ENCODE measurements at regions of chr21 and their contacts with region 1.

Region 1: DNA sequence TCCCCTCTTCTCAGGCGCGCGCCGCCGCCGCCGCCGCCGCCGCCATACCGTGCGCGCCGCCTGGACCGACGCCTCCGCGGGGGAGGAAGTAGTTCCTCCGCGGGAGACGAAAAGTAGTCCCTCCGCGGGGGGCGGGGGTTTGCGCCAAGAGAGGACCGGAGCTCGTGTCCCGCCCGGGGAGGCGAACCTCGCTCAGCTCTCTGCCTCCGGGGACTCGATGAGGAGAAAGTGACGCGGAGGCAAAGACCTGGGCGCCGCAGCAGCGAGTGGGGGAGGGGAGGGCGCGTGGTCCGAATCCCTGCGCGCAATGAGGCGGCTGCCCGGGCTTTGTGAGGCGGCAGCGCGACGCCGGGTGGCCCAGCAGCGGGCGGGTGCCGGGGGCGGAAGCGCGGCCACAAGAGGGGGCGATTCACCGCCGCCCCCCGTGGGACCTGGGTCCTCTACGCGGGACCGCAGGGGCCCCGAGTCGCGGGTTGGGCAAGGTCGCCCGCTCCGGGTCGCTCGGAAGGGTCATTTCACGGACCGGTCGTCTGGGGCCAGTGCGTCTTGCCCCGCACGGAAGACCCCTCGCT is at the start of gene BRWD1:
- DNase-seq: peak; percentile 91
- ATAC-seq: peak; percentile 86
- total RNA-seq, gene BRWD1: 29.1 TPM

Region 2: GRCh38 chr21:39349211-39350093 is 35.8 kb after region 1 on chr21:
- intact Hi-C with region 1: loop called (anchors 5 kb)
- DNase-seq: peak; percentile 98
- ATAC-seq: peak; percentile 97

Region 3: GRCh38 chr21:39388038-39388810 is 74.6 kb after region 1 on chr21:
- intact Hi-C with region 1: loop called (anchors 5 kb)
- DNase-seq: peak; percentile 95
- ATAC-seq: peak; percentile 84

Region 4: DNA sequence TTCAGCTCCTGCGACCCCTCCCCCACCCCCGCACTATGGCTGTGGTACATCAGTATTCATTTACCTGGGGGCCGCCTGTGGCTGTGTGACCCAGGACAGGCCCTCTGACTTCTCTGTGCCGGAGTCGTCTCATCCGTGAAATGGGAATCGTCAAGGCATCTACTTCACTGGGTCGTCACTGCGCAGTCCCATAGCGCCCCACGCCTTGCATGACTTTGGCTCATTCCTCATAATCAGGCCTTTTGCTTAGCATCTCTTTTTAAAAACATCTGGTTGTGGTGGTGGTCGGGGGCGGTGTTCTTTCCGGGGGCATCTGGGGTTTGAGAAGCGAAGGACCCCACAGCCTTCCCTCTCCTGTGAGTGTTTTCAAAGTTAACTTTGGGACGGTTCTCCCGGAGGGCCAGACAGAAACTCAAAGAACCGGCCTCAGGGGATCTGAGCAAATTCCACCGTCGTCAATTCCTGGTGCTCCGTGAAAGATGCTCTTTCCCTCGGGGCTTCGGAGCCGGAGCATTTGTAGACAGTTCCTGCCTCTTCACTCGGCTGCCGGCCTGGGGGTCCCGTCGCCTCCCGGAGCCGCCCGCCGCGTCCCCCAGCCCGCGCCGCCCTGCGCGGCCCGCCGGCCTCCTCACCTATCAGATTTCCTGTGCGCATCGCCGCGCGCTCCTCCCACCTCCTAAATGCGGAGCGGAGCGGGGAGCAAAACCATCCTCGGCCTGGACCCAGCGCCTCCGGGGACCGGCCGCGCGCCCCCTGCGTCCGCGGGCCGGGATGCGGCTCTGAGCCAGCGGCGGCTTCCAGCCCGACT is 298.8 kb after region 1 on chr21 and contains the start of gene B3GALT5:
- intact Hi-C with region 1: no loop called
- DNase-seq: no peak
- ATAC-seq: no peak
- total RNA-seq, gene B3GALT5: 0.03 TPM